A549 (cell line): ENCODE measurements at regions of chr16 and their contacts with region 1.

Region 1: DNA sequence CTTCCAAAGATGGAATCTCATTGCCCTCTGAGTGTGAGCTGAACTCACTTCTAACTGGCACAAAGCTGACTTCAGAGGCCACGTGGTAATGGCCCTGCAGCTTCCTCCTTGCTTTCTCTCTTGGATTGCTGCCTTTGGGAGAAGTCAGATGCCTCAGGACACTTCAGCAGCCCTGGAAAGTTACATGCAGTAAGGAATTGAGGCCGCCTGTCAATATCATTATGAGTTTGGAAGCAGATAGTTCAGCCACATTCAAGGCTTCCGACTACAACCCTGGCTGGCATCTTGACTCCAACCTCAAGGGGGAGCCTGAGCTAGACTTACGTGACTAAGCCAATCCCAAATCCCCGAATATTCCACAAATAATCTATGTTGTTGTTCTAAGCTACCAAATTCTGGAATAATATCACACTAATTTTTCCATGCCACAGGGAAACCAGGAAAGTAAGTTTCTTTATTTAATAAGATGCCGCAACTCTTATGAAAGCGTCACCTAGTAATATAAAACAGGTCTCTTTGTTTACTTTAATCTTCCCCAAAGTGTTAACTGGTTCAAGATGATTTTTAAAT is 13.6 kb downstream of the CEP20 start:
- DNase-seq: peak; percentile 80 to 87
- ATAC-seq: peak; percentile 90 to 94
- H3K4me3 ChIP-seq: no peak overlapping the region
- H3K27ac ChIP-seq: peak overlapping the region; percentile 90 to 96
- H3K4me1 ChIP-seq: peaks cover 50% of the 10 kb centered on the region
- CTCF ChIP-seq: peak; percentile 75
- EP300 ChIP-seq: no peak
- POLR2A ChIP-seq: no peak
- RAD21 ChIP-seq: peak; percentile 83 to 85

Region 2: GRCh38 chr16:15822957-15823356 is 51.9 kb before region 1 on chr16:
- CTCF ChIA-PET with region 1: interaction called, 11 read pairs
- POLR2A ChIA-PET with region 1: interaction called, 5 read pairs
- DNase-seq: no peak
- ATAC-seq: peak in 1 of 2 experiments; percentile 23; a peak in 1 of 6 replicates
- H3K4me3 ChIP-seq: no peak overlapping the region
- H3K27ac ChIP-seq: no peak overlapping the region
- H3K4me1 ChIP-seq: no peaks in the 10 kb centered on the region
- CTCF ChIP-seq: no peak
- EP300 ChIP-seq: no peak
- POLR2A ChIP-seq: no peak
- RAD21 ChIP-seq: no peak

Region 3: DNA sequence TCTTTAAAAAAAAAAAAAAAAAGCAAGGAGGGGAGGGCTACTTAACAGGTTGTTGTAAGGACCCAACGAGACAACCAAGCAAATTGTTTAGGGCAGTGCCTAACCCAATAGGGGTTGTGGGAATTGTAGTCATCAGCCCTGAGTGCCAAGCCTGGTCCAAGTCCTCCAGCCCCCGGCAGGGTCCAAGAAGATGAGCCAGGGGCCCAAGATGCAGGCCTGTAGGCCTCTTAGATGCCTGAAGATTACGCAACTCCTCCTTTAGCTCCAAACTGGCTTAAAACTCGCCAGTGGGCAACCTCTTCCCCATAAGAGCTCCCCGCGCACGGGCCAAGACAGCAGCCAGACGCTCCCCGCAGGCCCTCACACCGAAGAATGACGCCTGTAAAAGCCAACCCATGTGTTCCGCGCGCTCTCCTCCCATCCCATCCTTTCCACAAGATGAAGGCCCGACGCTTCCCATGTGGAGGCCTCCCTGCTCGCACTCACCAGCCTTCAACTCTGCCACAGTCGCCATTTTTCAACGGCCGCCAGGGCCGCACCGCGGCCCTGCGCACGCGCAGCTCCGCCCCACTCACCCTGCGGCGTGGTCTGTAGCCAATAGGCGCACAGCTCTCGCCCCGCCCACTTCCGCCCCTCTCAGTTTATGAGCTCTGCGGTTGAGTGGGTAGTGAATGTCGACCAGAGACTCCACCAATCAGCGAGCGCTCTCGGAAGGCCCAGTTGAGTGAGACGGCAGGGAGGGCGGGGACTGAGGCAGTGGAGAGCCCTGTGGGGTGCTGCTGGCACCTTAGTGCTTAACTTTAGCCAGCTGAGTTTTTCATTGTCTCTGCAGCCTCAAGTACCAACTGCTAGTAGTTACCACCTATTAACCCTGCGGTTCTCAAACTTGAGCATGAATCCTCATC is 13.5 kb after region 1 on chr16 and contains the start of gene CEP20:
- CTCF ChIA-PET with region 1: interaction called, 28 read pairs
- POLR2A ChIA-PET with region 1: interaction called, 12 read pairs
- DNase-seq: peak; percentile 99 to 100
- ATAC-seq: peak; percentile 100
- H3K4me3 ChIP-seq: peak within 1 kb of the TSS; percentile 86
- H3K27ac ChIP-seq: peak within 1 kb of the TSS; percentile 90 to 98
- H3K4me1 ChIP-seq: peaks cover 48% of the 10 kb centered on the region
- CTCF ChIP-seq: no peak
- EP300 ChIP-seq: no peak
- POLR2A ChIP-seq: peak; percentile 74
- RAD21 ChIP-seq: no peak
- polyA plus RNA-seq, gene CEP20: 97.5 and 102 TPM in 2 replicates

Region 4: GRCh38 chr16:15928261-15929104 is 53.7 kb after region 1 on chr16:
- CTCF ChIA-PET with region 1: interaction called, 12 read pairs
- POLR2A ChIA-PET with region 1: no interaction called
- DNase-seq: peak in 1 of 2 experiments; percentile 31
- ATAC-seq: peak in 1 of 2 experiments; percentile 62; a peak in 3 of 6 replicates
- H3K4me3 ChIP-seq: no peak overlapping the region
- H3K27ac ChIP-seq: peak overlapping the region; percentile 2 to 73; a peak in 4 of 6 replicates
- H3K4me1 ChIP-seq: peaks cover 12% of the 10 kb centered on the region
- CTCF ChIP-seq: no peak
- EP300 ChIP-seq: no peak
- POLR2A ChIP-seq: no peak
- RAD21 ChIP-seq: no peak

Region 5: DNA sequence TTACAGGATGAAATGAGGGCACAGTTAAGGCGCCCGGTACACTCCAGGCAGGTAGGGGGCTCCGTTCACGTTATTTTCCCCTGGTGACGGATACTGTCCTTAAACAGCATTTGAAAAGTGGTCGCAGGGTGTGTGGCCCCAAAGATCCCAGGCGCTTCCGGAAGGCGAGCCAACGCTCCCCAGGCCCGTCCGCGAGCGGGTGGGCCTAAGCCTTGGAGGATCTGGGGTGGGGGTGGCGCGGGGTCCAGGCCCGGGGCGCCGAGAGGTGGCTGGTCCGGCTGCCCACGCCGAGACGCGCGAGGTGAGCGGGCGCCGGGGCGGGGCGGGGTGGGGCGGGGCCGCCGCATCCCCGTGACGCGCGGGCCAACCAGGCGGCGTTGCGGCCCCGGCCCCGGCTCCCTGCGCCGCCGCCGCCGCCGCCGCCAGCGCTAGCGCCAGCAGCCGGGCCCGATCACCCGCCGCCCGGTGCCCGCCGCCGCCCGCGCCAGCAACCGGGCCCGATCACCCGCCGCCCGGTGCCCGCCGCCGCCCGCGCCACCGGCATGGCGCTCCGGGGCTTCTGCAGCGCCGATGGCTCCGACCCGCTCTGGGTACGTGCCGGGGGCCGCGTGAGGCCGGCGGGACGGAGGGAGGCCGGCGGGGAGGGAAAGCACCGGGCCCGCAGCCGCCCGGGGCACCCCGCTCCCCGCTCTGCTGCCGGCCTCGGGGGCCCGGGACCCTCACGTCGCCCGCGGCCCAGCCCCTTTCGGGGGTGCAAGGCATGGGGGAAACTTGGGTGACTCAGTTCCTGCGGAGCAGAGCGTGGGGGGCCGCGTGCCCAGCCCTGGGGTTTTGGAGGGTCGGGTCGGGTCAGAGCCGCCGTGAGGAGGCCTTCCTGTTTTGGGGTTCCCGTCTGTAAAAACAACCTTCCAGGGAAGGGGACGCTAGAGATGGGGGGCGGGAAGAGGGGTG is 74.7 kb after region 1 on chr16 and contains the start of gene ABCC1:
- CTCF ChIA-PET with region 1: interaction called, 28 read pairs
- POLR2A ChIA-PET with region 1: no interaction called
- DNase-seq: peak; percentile 63 to 65
- ATAC-seq: peak; percentile 56 to 82
- H3K4me3 ChIP-seq: peak within 1 kb of the TSS; percentile 97
- H3K27ac ChIP-seq: peak within 1 kb of the TSS; percentile 100
- H3K4me1 ChIP-seq: peaks cover 69% of the 10 kb centered on the region
- CTCF ChIP-seq: peak; percentile 23; the same call in 1 of the 3 replicates
- EP300 ChIP-seq: no peak
- POLR2A ChIP-seq: peak; percentile 28
- RAD21 ChIP-seq: peak in 1 of 2 experiments; percentile 29; a peak in 1 of 5 replicates
- polyA plus RNA-seq, gene ABCC1: 56.5 and 108 TPM in 2 replicates

Region 6: DNA sequence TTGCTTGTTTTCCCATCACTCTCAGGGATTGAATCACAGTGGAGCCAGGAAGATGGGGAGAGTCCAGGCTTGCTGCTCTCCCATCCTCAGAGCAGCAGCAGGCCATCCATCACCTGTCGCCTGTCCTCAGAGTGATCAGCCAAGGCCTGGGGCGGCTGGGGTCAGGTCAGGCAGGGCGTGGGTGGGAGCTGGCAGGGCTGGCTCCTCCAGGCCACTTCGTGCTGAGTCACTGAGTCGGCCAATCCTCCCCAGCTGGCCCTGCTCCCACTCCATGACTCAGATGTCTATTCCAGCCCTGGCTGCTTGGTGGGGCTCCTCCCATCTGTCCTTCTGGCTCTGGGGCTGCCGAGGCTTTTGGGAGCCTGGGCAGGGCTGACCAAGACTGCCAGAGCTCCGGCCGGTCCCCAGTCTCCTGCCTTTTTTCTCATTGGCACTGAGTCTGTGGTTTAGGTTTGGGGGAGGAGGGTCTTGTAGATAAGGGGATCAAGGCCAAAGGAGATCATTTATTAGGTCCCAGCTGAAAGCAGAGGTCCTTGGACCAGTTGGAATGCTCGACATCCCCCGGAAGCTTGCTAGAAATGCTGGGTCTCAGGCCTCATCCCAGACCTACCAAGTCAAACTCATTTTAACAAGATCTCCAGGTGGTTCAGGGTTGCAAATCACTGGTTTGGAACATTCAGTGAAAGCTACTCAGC is 147.3 kb after region 1 on chr16:
- CTCF ChIA-PET with region 1: interaction called, 26 read pairs
- POLR2A ChIA-PET with region 1: interaction called, 5 read pairs
- DNase-seq: peak; percentile 97 to 98
- ATAC-seq: peak; percentile 90 to 94
- H3K4me3 ChIP-seq: 0 out of 3 replicates have a peak overlapping the region, but pooled peaks have one; percentile 7
- H3K27ac ChIP-seq: peak overlapping the region; percentile 95 to 97
- H3K4me1 ChIP-seq: peaks cover 94% of the 10 kb centered on the region
- CTCF ChIP-seq: no peak
- EP300 ChIP-seq: peak; percentile 41 to 75; a peak in 3 of 5 replicates
- POLR2A ChIP-seq: no peak
- RAD21 ChIP-seq: peak; percentile 9 to 47; a peak in 4 of 5 replicates

Region 7: DNA sequence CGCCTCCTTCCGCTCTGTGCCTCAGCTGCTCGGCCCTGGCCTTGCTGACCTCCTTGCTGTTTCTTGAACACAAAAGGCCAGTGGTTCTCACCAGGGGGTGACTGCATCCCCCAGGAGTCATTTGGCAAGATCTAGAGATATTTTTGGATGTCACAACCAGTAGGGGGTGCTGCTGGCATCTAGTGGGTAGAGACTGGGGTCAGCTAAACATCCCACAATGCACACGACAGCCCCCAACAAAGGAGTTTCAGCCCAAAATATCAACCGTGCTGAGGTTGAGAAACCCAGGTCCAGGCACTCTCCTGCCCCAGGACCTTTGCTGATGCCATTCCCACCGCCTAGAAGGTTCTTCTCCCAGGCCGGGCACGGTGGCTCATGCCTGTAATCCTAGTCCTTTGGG is 308.7 kb after region 1 on chr16:
- CTCF ChIA-PET with region 1: no interaction called
- POLR2A ChIA-PET with region 1: no interaction called
- DNase-seq: no peak
- ATAC-seq: no peak
- H3K4me3 ChIP-seq: no peak overlapping the region
- H3K27ac ChIP-seq: no peak overlapping the region
- H3K4me1 ChIP-seq: no peaks in the 10 kb centered on the region
- CTCF ChIP-seq: peak; percentile 26
- EP300 ChIP-seq: no peak
- POLR2A ChIP-seq: no peak
- RAD21 ChIP-seq: no peak